Ascending aorta (tissue), 2 donors: ENCODE measurements at regions of chr19 and their contacts with region 1.

Region 1: GRCh38 chr19:21505459-21506451 is at the start of gene ZNF429:
- DNase-seq: peak; percentile 84 to 97
- H3K4me3 ChIP-seq: peak within 1 kb of the TSS; percentile 81 to 90
- H3K27ac ChIP-seq: peak within 1 kb of the TSS; percentile 96
- H3K4me1 ChIP-seq: peaks cover 0 to 15% of the 10 kb centered on the region in 2 donors
- H3K27me3 ChIP-seq: no peaks in the 10 kb centered on the region
- CTCF ChIP-seq: no peak
- total RNA-seq, gene ZNF429: 1.9 TPM

Region 2: GRCh38 chr19:20661150-20661819 is 844.5 kb before region 1 on chr19 and contains the start of gene ZNF626:
- intact Hi-C with region 1: loop called (anchors 10 kb)
- DNase-seq: peak; percentile 93 to 98
- H3K4me3 ChIP-seq: peak within 1 kb of the TSS; percentile 65 to 81
- H3K27ac ChIP-seq: peak within 1 kb of the TSS; percentile 72 to 82
- H3K4me1 ChIP-seq: peaks cover 0 to 14% of the 10 kb centered on the region in 2 donors
- H3K27me3 ChIP-seq: no peaks in the 10 kb centered on the region
- CTCF ChIP-seq: no peak
- total RNA-seq, gene ZNF626: 2.8 TPM

Region 3: GRCh38 chr19:21141787-21142464 is 363.8 kb before region 1 on chr19 and contains the start of gene ZNF431:
- intact Hi-C with region 1: loop called (anchors 5 kb)
- DNase-seq: peak; percentile 78 to 95
- H3K4me3 ChIP-seq: peak within 1 kb of the TSS; percentile 74 to 82
- H3K27ac ChIP-seq: peak within 1 kb of the TSS; percentile 68 to 70
- H3K4me1 ChIP-seq: peaks cover 0 to 5% of the 10 kb centered on the region in 2 donors
- H3K27me3 ChIP-seq: no peaks in the 10 kb centered on the region
- CTCF ChIP-seq: no peak
- total RNA-seq, gene ZNF431: 10.2 TPM

Region 4: GRCh38 chr19:21396893-21397572 is 108.7 kb before region 1 on chr19 and contains the start of gene ZNF493:
- intact Hi-C with region 1: loop called (anchors 5 kb)
- DNase-seq: peak; percentile 90 to 97
- H3K4me3 ChIP-seq: peak within 1 kb of the TSS; percentile 84 to 85
- H3K27ac ChIP-seq: peak within 1 kb of the TSS; percentile 74 to 79
- H3K4me1 ChIP-seq: peaks cover 3 to 10% of the 10 kb centered on the region in 2 donors
- H3K27me3 ChIP-seq: no peaks in the 10 kb centered on the region
- CTCF ChIP-seq: no peak
- total RNA-seq, gene ZNF493: 13.0 TPM

Region 5: GRCh38 chr19:21851596-21852345 is 346.0 kb after region 1 on chr19:
- intact Hi-C with region 1: loop called (anchors 5 kb)
- DNase-seq: peak; percentile 85 to 98
- H3K4me3 ChIP-seq: peak overlapping the region; percentile 80 to 81
- H3K27ac ChIP-seq: peak overlapping the region; percentile 74 to 81
- H3K4me1 ChIP-seq: peaks cover 0 to 9% of the 10 kb centered on the region in 2 donors
- H3K27me3 ChIP-seq: no peaks in the 10 kb centered on the region
- CTCF ChIP-seq: peak in 1 of 3 experiments; percentile 1